Posterior vena cava (tissue), 2 donors: ENCODE measurements at regions of chr2 and their contacts with region 1.

Region 1: DNA sequence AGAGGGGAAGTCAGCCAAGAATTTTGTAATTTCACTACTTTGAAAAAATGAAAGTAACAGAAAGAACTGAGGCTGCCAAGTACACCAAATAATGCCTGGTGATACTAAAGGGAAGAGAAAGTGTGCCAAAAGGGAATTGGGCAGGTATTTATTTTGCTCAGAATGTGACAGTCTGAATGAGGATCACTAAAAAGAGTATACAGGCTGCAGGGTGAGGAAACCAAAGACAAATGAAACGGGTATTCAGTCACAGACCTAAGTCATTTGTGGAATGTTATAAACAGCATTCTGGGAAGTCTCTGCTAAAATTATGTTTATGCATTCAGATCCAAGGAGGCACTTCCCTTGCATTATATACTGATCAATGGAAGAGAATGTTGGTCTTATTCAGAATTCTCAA is 418.6 kb upstream of the SLC39A10 start:
- DNase-seq: no peak

Region 2: DNA sequence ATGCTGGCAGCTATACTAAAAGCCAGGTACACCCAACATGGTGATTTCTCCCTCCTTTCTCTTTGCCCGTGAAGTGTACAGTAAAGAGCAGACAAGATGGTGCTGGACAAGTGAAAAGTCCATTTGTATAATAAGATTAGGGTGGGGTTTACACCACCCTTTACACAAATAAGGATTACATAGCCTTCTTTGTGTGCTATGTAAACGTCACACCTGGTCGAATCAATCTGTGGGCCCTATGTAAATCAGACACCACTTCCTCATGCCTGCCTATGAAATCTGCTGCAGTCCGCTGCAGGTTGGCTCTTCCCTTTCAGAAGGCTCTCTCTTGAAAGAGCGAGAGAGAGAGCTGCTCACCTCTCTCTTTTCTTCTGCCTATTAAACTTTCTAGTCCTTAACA is 635.6 kb before region 1 on chr2:
- intact Hi-C with region 1: loop called in 1 of 2 experiments (anchors 5 kb)
- DNase-seq: no peak